CD14-positive monocyte (primary cell): ENCODE measurements at regions of chr14 and their contacts with region 1.

Region 1: DNA sequence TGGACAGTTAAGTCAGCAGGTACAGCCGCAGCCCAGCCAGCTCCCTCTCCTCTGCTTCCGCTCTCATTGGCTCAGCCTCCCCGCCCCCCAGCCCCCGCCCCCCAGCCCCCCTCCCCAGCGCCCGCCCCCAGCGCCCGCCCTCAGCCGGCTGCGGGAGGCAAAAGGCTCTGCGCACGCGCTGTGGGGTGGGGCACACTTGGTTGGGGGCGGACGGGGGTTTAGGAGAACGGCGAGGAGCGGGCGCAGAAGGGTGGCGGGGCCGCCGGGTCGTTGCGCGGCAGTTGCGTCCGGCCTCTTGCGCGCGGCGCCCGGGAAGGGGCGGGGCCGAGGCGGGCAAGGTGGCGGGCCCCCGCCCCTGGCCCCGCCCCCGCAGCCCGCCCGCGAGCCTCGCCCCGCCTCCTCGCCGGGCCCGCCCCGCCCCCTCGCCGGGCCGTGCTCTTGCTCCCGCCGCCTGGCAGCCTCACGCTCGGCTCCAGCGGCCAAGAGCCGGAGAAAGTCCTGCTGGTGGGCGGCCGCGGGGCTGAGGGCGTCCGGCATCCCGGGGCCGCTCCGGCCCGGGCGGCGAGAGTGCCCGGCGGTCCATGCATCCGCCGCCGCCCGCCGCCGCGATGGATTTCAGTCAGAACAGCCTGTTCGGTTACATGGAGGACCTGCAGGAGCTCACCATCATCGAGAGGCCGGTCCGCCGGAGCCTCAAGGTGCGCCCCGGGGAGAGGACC is at the start of gene PPP4R4:
- DNase-seq: peak; percentile 56 to 69 (median 59)
- H3K4me3 ChIP-seq: peak within 1 kb of the TSS; percentile 47 to 74 (median 49)
- H3K4me3 Mint-ChIP-seq: peak within 1 kb of the TSS; percentile 76 to 93
- H3K27ac ChIP-seq: no peak within 1 kb of the TSS
- H3K27ac Mint-ChIP-seq: peak within 1 kb of the TSS in 4 of 7 donors; percentile 10 to 72 (median 46)
- H3K4me1 ChIP-seq: peaks cover 14 to 18% of the 10 kb centered on the region in 2 donors
- H3K4me1 Mint-ChIP-seq: peaks cover 21% of the 10 kb centered on the region
- H3K27me3 ChIP-seq: peaks cover 54 to 65% of the 10 kb centered on the region in 2 donors
- H3K27me3 Mint-ChIP-seq: peaks cover 58 to 75% (median 63%) of the 10 kb centered on the region in 3 donors
- CTCF ChIP-seq: no peak
- polyA plus RNA-seq, gene PPP4R4: 0.08 TPM in 1 of 3 donors, not detected in the others

Region 2: GRCh38 chr14:94036313-94037050 is 137.6 kb before region 1 on chr14:
- intact Hi-C with region 1: loop called in 1 of 2 experiments (anchors 10 kb)
- DNase-seq: peak; percentile 50 to 59 (median 53)
- H3K4me3 ChIP-seq: no peak overlapping the region
- H3K4me3 Mint-ChIP-seq: no peak overlapping the region
- H3K27ac ChIP-seq: no peak overlapping the region
- H3K27ac Mint-ChIP-seq: peak overlapping the region in 1 of 7 donors; percentile 42
- H3K4me1 ChIP-seq: no peaks in the 10 kb centered on the region
- H3K4me1 Mint-ChIP-seq: no peaks in the 10 kb centered on the region
- H3K27me3 ChIP-seq: no peaks in the 10 kb centered on the region
- H3K27me3 Mint-ChIP-seq: peaks cover 0 to 2% (median under 1%) of the 10 kb centered on the region in 3 donors
- CTCF ChIP-seq: peak; percentile 87

Region 3: GRCh38 chr14:94080471-94081289 is 93.4 kb before region 1 on chr14 and contains the start of gene DDX24:
- intact Hi-C with region 1: loop called in 1 of 2 experiments (anchors 5 kb)
- DNase-seq: peak; percentile 92 to 94 (median 93)
- H3K4me3 ChIP-seq: peak within 1 kb of the TSS; percentile 81 to 93 (median 83)
- H3K4me3 Mint-ChIP-seq: peak within 1 kb of the TSS; percentile 100
- H3K27ac ChIP-seq: peak within 1 kb of the TSS; percentile 81 to 87
- H3K27ac Mint-ChIP-seq: peak within 1 kb of the TSS; percentile 91 to 99 (median 96)
- H3K4me1 ChIP-seq: peaks cover 31 to 44% of the 10 kb centered on the region in 2 donors
- H3K4me1 Mint-ChIP-seq: peaks cover 41% of the 10 kb centered on the region
- H3K27me3 ChIP-seq: no peaks in the 10 kb centered on the region
- H3K27me3 Mint-ChIP-seq: peaks cover 0 to 2% (median 0%) of the 10 kb centered on the region in 3 donors
- CTCF ChIP-seq: no peak
- polyA plus RNA-seq, gene DDX24: 51.2 to 68.0 (median 53.8) TPM

Region 4: GRCh38 chr14:94129111-94129757 is 44.8 kb before region 1 on chr14 and contains the start of gene IFI27L2:
- intact Hi-C with region 1: loop called (anchors 5 kb)
- DNase-seq: peak; percentile 71 to 77 (median 77)
- H3K4me3 ChIP-seq: peak within 1 kb of the TSS; percentile 50 to 79 (median 78)
- H3K4me3 Mint-ChIP-seq: peak within 1 kb of the TSS; percentile 86 to 94
- H3K27ac ChIP-seq: peak within 1 kb of the TSS in 1 of 2 donors; percentile 74
- H3K27ac Mint-ChIP-seq: peak within 1 kb of the TSS; percentile 68 to 93 (median 82)
- H3K4me1 ChIP-seq: peaks cover 13 to 24% of the 10 kb centered on the region in 2 donors
- H3K4me1 Mint-ChIP-seq: peaks cover 16% of the 10 kb centered on the region
- H3K27me3 ChIP-seq: peaks cover 0 to 8% of the 10 kb centered on the region in 2 donors
- H3K27me3 Mint-ChIP-seq: peaks cover 6 to 13% (median 12%) of the 10 kb centered on the region in 3 donors
- CTCF ChIP-seq: peak; percentile 18
- polyA plus RNA-seq, gene IFI27L2: 55.4 to 156 (median 96.1) TPM

Region 5: DNA sequence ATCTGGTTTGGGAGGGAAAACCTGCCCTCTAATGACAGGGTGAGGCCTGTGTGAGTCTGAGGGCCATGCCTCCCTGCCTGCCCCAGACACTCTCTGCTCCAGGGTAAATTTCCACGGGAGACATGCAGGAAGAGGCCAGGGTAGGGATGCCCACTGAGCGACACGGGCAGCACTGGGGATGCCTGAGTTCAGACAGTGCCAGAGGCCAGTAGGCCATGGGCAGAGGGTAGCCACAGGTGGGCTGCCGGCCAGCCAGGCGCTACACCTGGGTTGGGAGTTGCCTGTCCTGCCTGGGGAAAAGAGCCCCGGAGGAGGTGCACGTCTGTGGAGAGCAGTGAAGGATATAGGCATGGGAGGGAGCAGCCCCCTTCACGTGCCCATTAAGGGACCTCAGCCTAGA is 331.6 kb after region 1 on chr14:
- intact Hi-C with region 1: no loop called
- DNase-seq: no peak
- H3K4me3 ChIP-seq: no peak overlapping the region
- H3K4me3 Mint-ChIP-seq: no peak overlapping the region
- H3K27ac ChIP-seq: no peak overlapping the region
- H3K27ac Mint-ChIP-seq: no peak overlapping the region
- H3K4me1 ChIP-seq: no peaks in the 10 kb centered on the region
- H3K4me1 Mint-ChIP-seq: no peaks in the 10 kb centered on the region
- H3K27me3 ChIP-seq: no peaks in the 10 kb centered on the region
- H3K27me3 Mint-ChIP-seq: peaks cover 5 to 9% (median 6%) of the 10 kb centered on the region in 3 donors
- CTCF ChIP-seq: no peak